HEK293 (cell line): ENCODE measurements at regions of chr10 and their contacts with region 1.

Region 1: GRCh38 chr10:6416892-6417512 is 163.1 kb downstream of the PRKCQ start:
- H3K4me3 ChIP-seq: no peak overlapping the region
- H3K27ac ChIP-seq: no peak overlapping the region
- H3K4me1 ChIP-seq: no peaks in the 10 kb centered on the region
- CTCF ChIP-seq: peak; percentile 60

Region 2: GRCh38 chr10:6678211-6678803 is 261.3 kb after region 1 on chr10:
- CTCF ChIA-PET with region 1: interaction called, 27 read pairs
- POLR2A ChIA-PET with region 1: no interaction called
- H3K4me3 ChIP-seq: no peak overlapping the region
- H3K27ac ChIP-seq: no peak overlapping the region
- H3K4me1 ChIP-seq: no peaks in the 10 kb centered on the region
- CTCF ChIP-seq: no peak